ENCODE measurements at regions of chr5 and their contacts with region 1.

Region 1: DNA sequence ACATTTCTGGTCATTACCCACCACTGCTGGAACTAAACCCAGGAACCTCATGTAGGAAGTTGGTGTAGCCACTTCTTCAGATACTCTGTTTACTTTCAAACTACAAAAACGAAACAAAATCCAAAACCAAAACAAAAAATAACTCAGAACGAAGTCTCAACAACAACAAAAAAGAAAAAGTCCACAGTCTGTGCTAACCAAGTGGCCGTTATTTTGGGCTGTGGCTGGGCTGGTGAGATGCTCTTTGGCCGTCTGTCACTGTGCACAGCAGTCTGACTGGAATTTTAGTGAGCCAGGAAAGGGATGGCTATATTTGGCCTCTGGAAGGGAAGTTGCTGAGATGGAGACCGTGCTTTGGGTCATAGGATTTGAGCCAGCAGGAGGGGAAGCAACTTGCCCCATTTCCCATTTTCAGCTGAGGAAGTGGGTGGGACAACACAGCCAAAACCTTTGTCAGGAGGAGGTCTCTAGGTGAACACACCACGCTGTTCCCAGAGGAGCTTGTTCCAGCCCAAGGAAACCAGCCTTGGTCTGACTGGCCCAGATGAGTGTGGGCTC is 334.1 kb downstream of the ZSWIM6 start:
- DNase-seq: no peak
- ATAC-seq: peak; percentile 61 to 81
- H3K4me3 ChIP-seq: no peak overlapping the region
- H3K27ac ChIP-seq: peak overlapping the region; percentile 46
- H3K4me1 ChIP-seq: peaks cover 4% of the 10 kb centered on the region
- H3K27me3 ChIP-seq: no peaks in the 10 kb centered on the region

Region 2: DNA sequence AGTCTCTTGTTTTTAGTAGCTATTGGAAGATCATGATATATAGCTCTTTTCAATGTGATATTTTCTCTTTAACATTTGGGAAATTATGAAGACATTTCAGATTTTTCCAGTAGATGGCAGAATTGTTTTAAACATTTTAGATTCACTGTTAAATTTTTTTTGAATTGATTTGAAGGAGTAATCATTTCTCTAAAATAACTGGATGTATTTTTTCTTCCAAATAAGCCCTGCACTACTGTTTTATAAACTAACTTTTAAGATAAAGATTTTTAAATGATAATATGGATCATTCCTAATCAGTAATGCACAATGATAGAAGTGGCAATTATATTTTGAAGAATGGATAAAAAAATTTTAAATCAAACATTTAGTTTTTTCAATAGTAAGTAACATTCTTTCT is 707.0 kb before region 1 on chr5:
- intact Hi-C with region 1: loop called in 1 of 4 experiments (anchors 10 kb)
- DNase-seq: no peak
- ATAC-seq: no peak
- H3K4me3 ChIP-seq: no peak overlapping the region
- H3K27ac ChIP-seq: no peak overlapping the region
- H3K4me1 ChIP-seq: no peaks in the 10 kb centered on the region
- H3K27me3 ChIP-seq: no peaks in the 10 kb centered on the region

Region 3: GRCh38 chr5:61055434-61056006 is 610.6 kb before region 1 on chr5:
- intact Hi-C with region 1: loop called in 1 of 4 experiments (anchors 10 kb)
- DNase-seq: no peak
- ATAC-seq: no peak
- H3K4me3 ChIP-seq: no peak overlapping the region
- H3K27ac ChIP-seq: no peak overlapping the region
- H3K4me1 ChIP-seq: no peaks in the 10 kb centered on the region
- H3K27me3 ChIP-seq: no peaks in the 10 kb centered on the region

Region 4: DNA sequence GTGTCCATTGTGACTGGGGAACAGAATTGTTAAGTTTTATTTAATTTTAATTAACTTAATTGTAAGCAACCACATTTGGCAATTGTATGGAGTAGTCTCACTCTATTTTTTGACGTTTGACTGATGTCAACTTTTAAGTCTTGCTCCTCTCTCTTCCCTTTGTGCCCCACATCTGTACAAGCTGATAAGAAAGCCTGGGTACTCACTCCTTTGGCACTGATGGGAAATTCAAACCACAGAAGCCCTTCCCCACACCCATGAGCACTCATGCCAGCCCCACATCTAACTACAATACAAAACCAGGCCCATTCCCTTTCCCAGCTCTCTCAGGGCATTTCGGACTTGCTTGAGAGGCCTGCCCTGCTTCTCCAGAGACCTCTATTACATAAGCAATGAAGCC is 188.4 kb after region 1 on chr5:
- intact Hi-C with region 1: loop called in 1 of 4 experiments (anchors 5 kb)
- DNase-seq: no peak
- ATAC-seq: no peak
- H3K4me3 ChIP-seq: no peak overlapping the region
- H3K27ac ChIP-seq: no peak overlapping the region
- H3K4me1 ChIP-seq: no peaks in the 10 kb centered on the region
- H3K27me3 ChIP-seq: no peaks in the 10 kb centered on the region

Region 5: DNA sequence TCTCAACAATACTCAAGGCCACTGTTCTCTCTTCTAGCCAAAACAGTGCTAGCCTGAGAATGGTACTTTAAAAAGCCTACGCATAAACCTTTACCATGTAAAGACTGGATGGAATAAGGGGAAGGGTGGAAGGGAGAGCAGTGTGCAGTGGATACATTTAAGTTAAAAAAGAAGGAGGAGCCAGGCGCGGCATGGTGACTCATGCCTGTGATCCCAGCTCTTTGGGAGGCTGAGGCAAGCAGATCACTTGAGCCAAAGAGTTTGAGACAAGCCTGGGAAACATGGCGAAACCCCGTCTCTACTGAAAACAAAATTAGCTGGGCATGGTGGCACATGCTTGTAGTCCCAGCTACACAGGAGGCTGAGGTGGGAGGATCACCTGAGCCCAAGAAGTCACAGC is 512.1 kb after region 1 on chr5:
- intact Hi-C with region 1: no loop called
- DNase-seq: no peak
- ATAC-seq: no peak
- H3K4me3 ChIP-seq: no peak overlapping the region
- H3K27ac ChIP-seq: no peak overlapping the region
- H3K4me1 ChIP-seq: no peaks in the 10 kb centered on the region
- H3K27me3 ChIP-seq: no peaks in the 10 kb centered on the region

Measured in right cardiac atrium (tissue), 5 donors.